Posterior vena cava (tissue), 2 donors: ENCODE measurements at regions of chr2 and their contacts with region 1.

Region 1: DNA sequence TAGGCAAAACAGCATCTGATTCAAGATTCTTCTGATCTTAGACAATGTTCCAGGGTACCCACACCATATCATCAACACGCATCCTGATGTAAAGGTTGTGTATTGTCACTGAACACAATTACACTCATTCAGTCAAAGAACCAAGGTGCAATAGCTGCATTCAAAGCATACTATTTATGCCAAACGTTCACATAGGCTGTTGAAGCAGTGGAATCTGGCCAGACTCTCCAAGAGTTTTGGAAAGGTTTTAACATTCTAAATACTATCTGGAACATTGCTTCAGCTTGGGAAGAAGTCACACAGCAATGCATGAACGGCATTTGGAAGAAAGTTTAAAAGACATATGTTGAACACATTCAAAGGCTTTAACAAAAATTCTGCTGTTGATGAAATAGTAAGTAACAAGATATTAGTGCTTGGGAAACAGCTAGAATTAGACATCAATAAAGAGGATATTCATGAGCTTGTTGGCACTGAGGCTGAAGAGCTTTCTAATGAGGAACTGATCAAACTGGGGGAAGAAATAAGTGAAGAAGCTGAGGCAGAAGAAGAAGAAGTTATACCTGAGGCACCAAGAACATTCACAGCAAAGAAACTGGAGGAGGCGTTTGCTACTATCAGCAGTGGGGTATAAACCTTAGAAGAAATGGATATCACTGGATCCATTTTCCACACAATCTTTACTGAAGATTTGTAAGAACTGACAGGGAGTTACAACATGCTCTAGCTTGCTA is 47.6 kb upstream of the MSH6 start:
- DNase-seq: no peak

Region 2: DNA sequence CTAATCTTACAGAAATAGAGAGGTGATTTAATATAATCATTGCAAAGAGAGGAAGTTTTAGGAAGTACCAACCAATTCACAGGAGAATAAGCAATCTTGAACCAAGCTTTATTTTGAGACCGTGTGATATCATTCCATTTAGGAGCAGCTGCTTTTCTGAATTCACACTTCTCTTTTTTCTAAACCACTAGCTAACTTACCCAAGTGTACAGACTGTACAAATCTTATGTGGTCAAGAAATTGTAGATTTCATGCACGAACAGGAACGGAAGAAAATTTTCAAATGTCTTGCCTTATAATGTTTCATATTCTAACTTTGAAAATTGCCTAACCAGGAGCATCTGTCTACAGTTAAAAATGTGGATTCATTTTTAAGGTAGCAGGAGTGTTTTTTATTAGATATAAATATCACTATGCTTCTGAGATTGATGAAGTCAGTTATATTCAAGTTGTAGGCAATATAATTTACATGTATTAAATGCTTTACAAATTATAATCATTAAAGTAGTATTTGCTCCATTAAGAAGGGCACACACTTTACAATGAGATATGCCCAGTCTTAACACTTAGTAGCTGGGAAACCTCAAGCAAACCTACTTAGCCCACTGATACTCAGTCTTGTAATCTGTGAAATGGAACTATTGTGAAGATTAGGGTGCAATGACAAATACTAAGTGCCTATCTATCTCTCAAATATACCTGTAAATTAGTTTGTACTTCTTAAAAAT is 492.5 kb after region 1 on chr2:
- intact Hi-C with region 1: loop called in 1 of 2 experiments (anchors 10 kb)
- DNase-seq: no peak